ENCODE measurements at regions of chr15 and their contacts with region 1.

Region 1: GRCh38 chr15:51380999-51381795 is 39.7 kb downstream of the GLDN start:
- DNase-seq: peak; percentile 67
- H3K4me3 ChIP-seq: no peak overlapping the region
- H3K27ac ChIP-seq: no peak overlapping the region
- H3K4me1 ChIP-seq: no peaks in the 10 kb centered on the region
- H3K27me3 ChIP-seq: no peaks in the 10 kb centered on the region
- CTCF ChIP-seq: peak; percentile 87

Region 2: DNA sequence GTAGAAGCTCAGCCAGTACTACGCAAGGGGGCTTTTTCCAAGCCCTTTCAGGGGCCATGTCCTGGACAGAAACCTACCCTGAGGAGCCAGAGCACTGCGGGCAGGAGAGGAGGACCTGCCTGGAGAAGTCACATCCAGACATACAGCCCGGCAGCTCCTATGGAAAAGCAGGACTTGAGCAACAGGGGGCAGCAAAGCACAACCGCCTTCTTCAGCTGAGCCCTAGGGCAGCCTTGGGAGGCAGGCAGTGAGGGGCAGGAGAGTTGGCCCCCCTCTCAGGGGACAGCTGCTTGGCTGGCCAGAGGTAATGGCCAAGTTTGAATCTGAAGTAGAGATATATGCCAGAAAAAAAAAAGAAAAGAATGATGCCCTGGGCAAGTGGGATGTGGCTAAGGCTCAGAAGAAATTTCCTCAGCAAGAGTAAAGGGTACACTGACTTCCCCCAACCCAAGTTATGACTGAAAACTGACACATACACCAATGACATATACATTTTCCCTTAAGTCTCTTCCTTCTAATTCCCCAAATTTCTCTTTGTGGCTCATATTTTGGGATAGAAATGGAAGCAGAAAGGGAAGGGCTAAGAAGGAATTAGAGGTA is 99.7 kb before region 1 on chr15:
- intact Hi-C with region 1: loop called (anchors 1 kb)
- DNase-seq: peak; percentile 79
- H3K4me3 ChIP-seq: no peak overlapping the region
- H3K27ac ChIP-seq: no peak overlapping the region
- H3K4me1 ChIP-seq: no peaks in the 10 kb centered on the region
- H3K27me3 ChIP-seq: no peaks in the 10 kb centered on the region
- CTCF ChIP-seq: peak; percentile 56

Region 3: DNA sequence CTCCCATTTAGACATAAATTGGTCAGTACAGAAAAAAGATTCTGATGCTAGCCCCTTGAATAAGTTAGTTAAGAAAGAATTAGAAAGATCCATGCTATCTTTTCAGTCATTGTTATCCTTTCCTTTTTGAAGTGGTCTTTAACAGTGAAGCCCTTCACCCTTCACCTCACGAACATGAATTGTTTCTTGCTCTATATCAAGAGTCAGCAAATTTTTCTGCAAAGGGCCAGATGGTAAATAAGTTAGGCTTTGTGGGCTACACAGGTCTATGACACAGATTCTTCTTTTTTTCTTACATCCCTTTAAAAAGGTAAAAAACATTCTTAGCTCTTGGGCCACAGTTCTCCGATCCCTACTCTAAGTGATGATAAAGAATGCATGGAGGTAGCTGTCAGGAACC is 166.5 kb after region 1 on chr15:
- intact Hi-C with region 1: no loop called
- DNase-seq: no peak
- H3K4me3 ChIP-seq: no peak overlapping the region
- H3K27ac ChIP-seq: no peak overlapping the region
- H3K4me1 ChIP-seq: no peaks in the 10 kb centered on the region
- H3K27me3 ChIP-seq: no peaks in the 10 kb centered on the region
- CTCF ChIP-seq: no peak

Measured in colonic mucosa (tissue), 4 donors.